Head of caudate nucleus (tissue), 42 donors: ENCODE measurements at regions of chr13 and their contacts with region 1.

Region 1: GRCh38 chr13:49792550-49793324 is at the start of gene KPNA3:
- DNase-seq: peak; percentile 90 to 98 (median 96)

Region 2: DNA sequence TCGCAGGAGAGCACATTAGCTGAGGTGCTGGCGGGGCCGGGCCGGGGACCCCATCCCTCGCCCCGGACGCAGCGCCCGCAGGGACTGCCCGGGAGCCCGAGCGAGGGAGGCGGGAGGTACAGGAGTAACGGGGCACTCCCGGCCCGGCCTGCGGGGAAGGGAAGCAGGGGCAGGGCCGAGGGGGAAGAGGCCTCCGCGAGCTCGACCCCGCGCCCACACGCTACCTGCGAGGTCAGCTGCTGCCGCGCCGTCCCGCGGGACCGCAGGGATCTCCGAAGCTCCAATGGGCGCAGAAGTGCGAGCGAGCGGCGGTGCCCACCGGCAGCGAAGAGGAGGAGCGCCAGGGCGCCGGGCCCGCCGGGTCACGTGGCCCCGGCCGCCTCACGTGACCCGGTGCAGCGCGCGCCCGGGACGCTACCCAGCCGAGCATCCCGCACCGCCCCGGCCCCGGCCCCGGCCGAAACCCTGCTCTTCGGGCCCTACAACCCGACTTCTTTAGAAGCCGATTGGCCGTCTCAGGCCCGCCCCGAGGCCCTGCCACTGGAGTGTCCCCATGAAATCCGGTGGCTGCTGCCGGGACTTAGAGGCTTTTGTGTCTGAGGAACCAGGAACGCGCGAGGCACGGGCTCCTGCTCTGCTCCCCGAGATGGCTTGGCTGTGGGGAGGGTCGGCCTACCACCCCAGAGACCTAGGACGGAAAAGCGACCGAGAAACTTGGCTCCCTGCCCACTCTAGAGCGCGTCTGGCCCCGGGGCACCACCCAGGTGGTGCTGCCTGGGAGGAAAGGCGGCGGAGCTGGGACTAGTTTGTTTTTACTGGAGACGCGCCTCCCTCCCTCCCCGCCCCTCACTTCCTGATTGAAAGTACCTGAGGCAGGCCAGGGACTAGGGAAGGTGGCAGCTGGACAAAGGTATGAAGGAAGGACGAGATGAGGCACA is 207.2 kb before region 1 on chr13 and contains the start of gene RCBTB1:
- intact Hi-C with region 1: no loop called
- DNase-seq: peak; percentile 26 to 84 (median 68)

Region 3: GRCh38 chr13:49669735-49670309 is 122.9 kb before region 1 on chr13:
- intact Hi-C with region 1: loop called (anchors 10 kb)
- DNase-seq: peak; percentile 34 to 87 (median 68)

Region 4: DNA sequence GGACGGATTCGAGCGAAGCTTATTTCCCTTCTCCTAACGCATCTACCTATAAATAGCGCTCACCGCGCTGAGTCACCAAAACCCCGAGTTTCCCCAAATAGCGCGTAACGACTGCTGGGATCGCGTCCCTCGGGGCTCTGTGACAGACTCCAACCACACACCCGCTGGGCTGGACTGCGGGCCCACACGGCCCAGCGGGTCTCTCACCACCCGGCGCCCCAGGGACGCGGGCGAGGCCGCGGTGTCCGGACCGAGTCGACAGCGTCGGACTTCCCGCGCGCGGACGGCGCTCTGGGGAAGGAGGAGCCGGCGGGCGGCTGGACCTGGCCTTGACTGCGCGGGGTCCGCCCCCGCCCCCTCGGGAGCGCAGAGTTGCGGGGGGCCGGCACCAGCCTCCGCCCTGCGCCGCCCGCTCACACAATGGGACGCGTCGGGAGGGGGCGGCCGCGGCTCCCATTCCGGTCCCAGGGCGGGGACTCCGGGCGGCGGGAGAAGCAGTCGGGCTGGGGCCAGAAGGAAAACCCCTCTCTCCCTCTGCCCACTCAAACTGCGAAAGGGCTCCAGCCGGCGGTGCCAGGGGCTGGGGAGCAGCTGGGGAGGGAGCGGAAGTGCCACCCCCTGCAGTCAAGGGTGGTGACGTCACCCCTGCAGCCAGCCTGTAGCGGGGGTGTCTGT is 331.3 kb after region 1 on chr13:
- intact Hi-C with region 1: loop called (anchors 5 kb)
- DNase-seq: peak in 27 of 42 donors; percentile 41 to 96 (median 71)

Region 5: GRCh38 chr13:50911937-50912795 is 1119.4 kb after region 1 on chr13:
- intact Hi-C with region 1: loop called (anchors 5 kb)
- DNase-seq: peak; percentile 72 to 96 (median 91)